Activated naive CD4-positive, alpha-beta T cell treated with anti-CD3 and anti-CD28 coated beads for 36 hours (primary cell): ENCODE measurements at regions of chr4 and their contacts with region 1.

Region 1: DNA sequence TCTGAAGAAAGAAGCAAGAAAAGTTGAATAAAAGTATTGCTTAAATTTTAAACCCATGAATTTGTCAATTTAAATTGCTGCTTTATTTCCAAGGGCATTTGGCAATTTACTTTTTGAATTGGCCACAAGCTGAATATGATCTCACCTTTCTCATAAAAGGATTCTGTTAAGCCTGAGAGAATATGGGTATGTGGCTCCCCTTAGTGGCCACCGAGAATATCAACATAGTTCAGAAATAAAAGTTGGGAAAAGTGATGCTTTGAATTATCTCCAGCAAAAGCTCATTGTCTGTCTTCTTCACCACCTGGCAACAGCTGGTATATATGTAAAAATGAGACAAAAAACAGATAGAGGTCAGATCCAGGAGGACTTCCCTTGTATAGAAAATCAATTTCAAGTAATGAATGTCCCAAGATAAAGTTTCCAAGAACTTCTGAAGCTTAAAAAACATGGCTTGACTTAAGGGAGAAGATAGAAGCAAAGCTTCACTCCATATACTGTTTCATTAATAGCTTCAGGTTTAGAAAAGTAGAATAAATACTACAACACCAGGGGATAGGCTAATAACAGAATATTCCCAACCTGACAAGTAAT is 290.7 kb upstream of the FAM241A start:
- DNase-seq: peak; percentile 40
- H3K4me3 Mint-ChIP-seq: no peak overlapping the region
- H3K27ac Mint-ChIP-seq: no peak overlapping the region
- H3K4me1 Mint-ChIP-seq: no peaks in the 10 kb centered on the region
- H3K27me3 Mint-ChIP-seq: no peaks in the 10 kb centered on the region

Region 2: DNA sequence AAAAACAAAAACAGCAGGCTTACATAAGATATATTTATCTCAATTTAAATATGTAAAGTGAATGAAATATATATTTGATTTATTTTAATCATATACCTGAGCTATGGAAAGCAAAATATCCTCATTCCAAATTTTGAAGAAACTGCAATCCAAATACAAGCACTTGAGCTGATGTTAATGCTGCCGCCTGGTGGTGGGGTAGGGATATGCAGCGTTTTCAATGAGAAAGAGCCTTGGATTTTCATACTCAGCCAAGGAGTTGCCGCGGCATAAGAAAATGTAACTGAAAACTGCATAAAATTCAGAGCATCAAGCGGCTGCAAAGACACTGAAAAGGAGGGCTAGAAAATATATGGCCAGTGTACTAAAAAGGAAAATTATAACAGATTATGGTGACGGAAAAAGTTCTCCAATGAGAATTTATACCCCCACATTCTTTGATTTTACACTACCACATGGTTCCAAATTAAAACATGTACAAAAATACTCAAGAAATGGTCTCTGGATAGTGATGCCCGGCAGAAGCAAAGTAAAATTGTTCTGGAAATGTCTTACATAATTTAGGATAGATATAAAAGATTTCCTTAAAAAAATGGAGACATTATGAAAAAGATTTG is 571.4 kb before region 1 on chr4:
- CTCF ChIA-PET with region 1: no interaction called
- intact Hi-C with region 1: loop called (anchors 10 kb)
- DNase-seq: peak; percentile 64
- H3K4me3 Mint-ChIP-seq: no peak overlapping the region
- H3K27ac Mint-ChIP-seq: no peak overlapping the region
- H3K4me1 Mint-ChIP-seq: no peaks in the 10 kb centered on the region
- H3K27me3 Mint-ChIP-seq: no peaks in the 10 kb centered on the region

Region 3: DNA sequence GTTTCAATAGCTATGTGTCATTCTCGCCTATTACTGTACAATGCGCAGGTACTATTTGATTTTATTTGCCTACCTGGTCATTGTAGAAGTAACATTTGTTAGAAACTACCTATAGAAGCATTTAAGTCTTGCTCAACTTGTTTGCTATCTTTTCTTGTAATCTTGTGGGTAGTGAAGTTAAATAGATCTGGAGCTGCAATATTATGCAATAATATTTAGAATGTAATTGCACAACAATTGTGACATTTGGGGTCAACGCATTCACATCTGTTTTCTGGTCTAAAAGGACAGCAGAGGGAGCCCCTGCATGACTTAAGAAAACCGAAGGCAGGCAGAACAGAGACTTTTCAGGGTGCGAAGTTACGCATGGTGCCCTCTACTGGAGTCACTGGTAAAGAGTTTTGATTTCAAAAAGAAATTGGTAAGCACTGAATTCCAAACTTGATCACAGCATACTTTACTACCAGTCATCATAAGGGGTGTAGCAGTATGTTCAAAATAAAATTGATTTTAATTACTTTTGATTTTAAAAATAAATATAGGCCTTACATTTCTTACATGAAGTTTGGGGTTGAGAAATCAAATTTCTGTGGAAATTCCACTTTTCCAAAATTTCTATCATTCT is 212.5 kb before region 1 on chr4:
- CTCF ChIA-PET with region 1: no interaction called
- intact Hi-C with region 1: loop called (anchors 1 kb)
- DNase-seq: peak; percentile 53
- H3K4me3 Mint-ChIP-seq: no peak overlapping the region
- H3K27ac Mint-ChIP-seq: no peak overlapping the region
- H3K4me1 Mint-ChIP-seq: no peaks in the 10 kb centered on the region
- H3K27me3 Mint-ChIP-seq: no peaks in the 10 kb centered on the region

Region 4: GRCh38 chr4:111689214-111689613 is 165.4 kb before region 1 on chr4:
- CTCF ChIA-PET with region 1: no interaction called
- intact Hi-C with region 1: no loop called
- DNase-seq: no peak
- H3K4me3 Mint-ChIP-seq: no peak overlapping the region
- H3K27ac Mint-ChIP-seq: no peak overlapping the region
- H3K4me1 Mint-ChIP-seq: no peaks in the 10 kb centered on the region
- H3K27me3 Mint-ChIP-seq: no peaks in the 10 kb centered on the region

Region 5: DNA sequence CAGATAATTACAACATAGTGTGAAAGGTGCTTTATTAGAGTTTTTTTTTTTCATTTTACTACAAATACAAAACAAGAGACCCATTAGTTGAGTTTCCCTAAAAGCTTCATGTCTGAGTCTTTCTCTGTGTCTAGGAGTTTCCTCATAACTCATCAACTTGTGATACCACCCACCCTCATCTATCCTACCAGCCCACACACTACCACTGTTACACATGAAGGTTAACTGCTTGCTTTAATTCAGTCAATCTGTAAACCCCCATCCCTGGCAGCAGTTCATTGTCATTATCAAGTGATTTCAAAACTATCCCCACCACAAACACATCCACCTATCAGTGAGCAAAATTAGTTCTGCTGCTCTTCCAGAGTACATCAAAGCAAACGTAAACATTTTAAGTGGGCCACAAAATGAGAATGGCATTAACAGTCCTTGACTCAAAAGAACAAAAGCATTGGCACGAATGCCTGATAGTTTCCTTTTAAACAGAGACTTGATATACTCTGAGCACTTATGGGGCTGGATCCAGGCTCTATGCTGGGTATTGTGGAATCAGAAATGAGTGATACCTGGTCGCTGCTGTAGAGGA is 40.9 kb before region 1 on chr4:
- CTCF ChIA-PET with region 1: no interaction called
- intact Hi-C with region 1: no loop called
- DNase-seq: no peak
- H3K4me3 Mint-ChIP-seq: no peak overlapping the region
- H3K27ac Mint-ChIP-seq: no peak overlapping the region
- H3K4me1 Mint-ChIP-seq: no peaks in the 10 kb centered on the region
- H3K27me3 Mint-ChIP-seq: no peaks in the 10 kb centered on the region

Region 6: GRCh38 chr4:112031712-112032328 is 177.2 kb after region 1 on chr4:
- CTCF ChIA-PET with region 1: no interaction called
- intact Hi-C with region 1: loop called (anchors 10 kb)
- DNase-seq: peak; percentile 13
- H3K4me3 Mint-ChIP-seq: no peak overlapping the region
- H3K27ac Mint-ChIP-seq: no peak overlapping the region
- H3K4me1 Mint-ChIP-seq: no peaks in the 10 kb centered on the region
- H3K27me3 Mint-ChIP-seq: peaks cover 16% of the 10 kb centered on the region